Right cardiac atrium (tissue), 5 donors: ENCODE measurements at regions of chr5 and their contacts with region 1.

Region 1: DNA sequence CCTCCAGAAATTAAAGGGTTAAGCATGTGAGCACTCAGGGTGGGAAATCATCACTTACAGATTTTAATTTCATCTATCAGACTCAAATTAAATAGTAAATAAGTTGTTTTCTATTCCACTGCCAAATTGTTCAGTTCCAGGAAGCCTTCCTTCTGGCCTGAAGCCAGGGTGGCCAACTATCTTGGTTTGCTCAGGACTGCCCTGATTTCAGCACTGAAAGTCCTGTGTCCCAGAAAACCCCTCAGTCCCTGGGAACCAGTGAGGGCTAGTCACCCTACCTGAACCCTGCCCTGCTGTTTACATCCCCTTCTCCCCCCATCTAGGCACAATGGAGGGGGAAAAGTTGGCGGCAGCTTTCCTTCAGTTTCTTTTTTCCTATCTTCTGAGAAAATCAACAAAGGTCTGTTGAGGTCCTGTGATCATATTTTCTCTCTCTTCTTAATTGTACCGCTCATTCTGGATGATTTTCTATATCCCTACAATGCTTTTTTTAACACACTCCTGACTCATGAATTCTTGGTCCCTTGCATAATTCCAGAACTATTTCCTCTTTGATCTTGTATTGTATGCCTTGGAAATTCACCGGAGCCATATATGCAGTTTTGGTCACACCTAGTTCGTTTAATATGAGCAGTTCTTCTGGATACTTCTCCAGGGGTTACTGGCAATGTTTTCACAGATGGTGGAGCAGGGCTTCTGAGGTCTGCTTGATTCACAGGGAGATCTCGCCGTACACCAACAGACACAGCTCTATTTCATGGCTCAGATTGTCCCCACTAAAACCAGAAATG is 103.8 kb downstream of the MAP1B start:
- DNase-seq: peak; percentile 72 to 86 (median 82)
- ATAC-seq: peak; percentile 80 to 82
- H3K4me3 ChIP-seq: no peak overlapping the region
- H3K27ac ChIP-seq: peak overlapping the region; percentile 68
- H3K4me1 ChIP-seq: peaks cover 9% of the 10 kb centered on the region
- H3K27me3 ChIP-seq: no peaks in the 10 kb centered on the region

Region 2: GRCh38 chr5:72252574-72253155 is 41.6 kb after region 1 on chr5:
- intact Hi-C with region 1: no loop called
- DNase-seq: no peak
- ATAC-seq: no peak
- H3K4me3 ChIP-seq: no peak overlapping the region
- H3K27ac ChIP-seq: no peak overlapping the region
- H3K4me1 ChIP-seq: peaks cover 11% of the 10 kb centered on the region
- H3K27me3 ChIP-seq: no peaks in the 10 kb centered on the region

Region 3: GRCh38 chr5:72268753-72269410 is 57.8 kb after region 1 on chr5:
- intact Hi-C with region 1: loop called in 1 of 4 experiments (anchors 10 kb)
- DNase-seq: peak in 1 of 3 donors; percentile 58
- ATAC-seq: peak in 1 of 2 donors; percentile 47
- H3K4me3 ChIP-seq: no peak overlapping the region
- H3K27ac ChIP-seq: no peak overlapping the region
- H3K4me1 ChIP-seq: no peaks in the 10 kb centered on the region
- H3K27me3 ChIP-seq: no peaks in the 10 kb centered on the region